ENCODE measurements at regions of chr6 and their contacts with region 1.

Region 1: GRCh38 chr6:6131492-6132109 is 124.9 kb upstream of the NRN1 start:
- DNase-seq: peak; percentile 11
- ATAC-seq: no peak
- H3K4me3 Mint-ChIP-seq: no peak overlapping the region
- H3K27ac Mint-ChIP-seq: no peak overlapping the region
- H3K4me1 Mint-ChIP-seq: no peaks in the 10 kb centered on the region
- H3K27me3 Mint-ChIP-seq: peaks cover 5% of the 10 kb centered on the region

Region 2: GRCh38 chr6:5471044-5471443 is 660.6 kb before region 1 on chr6:
- CTCF ChIA-PET with region 1: interaction called, 5 read pairs
- POLR2A ChIA-PET with region 1: no interaction called
- intact Hi-C with region 1: loop called in 1 of 2 experiments (anchors 1 kb)
- DNase-seq: peak; percentile 79
- ATAC-seq: peak; percentile 89
- H3K4me3 Mint-ChIP-seq: no peak overlapping the region
- H3K27ac Mint-ChIP-seq: no peak overlapping the region
- H3K4me1 Mint-ChIP-seq: peaks cover 4% of the 10 kb centered on the region
- H3K27me3 Mint-ChIP-seq: no peaks in the 10 kb centered on the region

Region 3: DNA sequence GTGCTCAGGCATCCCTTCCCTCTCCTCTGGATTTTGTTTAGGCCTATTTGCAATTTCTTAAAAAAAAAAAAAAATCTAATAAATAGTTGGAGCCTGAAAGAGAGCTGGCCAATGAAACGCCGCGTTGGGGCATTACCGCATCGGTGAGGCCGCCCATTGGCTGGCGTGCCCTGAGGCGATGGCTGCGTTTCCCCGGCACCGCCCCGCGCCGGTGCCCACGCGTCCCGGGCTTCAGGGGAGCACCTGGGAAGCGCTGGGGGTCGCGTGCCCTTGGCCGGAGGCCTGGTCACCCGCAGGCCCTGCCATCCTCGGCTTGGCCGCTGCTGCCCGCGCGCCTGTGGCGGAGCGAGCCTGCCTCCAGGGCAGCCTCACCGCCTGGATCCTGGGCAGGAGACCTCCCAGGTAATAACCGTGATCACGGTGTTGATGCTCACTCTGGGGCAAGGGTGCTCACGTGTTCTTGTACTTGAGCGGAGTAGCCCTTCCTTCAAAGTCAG is 280.3 kb before region 1 on chr6:
- CTCF ChIA-PET with region 1: no interaction called
- POLR2A ChIA-PET with region 1: no interaction called
- intact Hi-C with region 1: no loop called
- DNase-seq: peak; percentile 84
- ATAC-seq: peak; percentile 99
- H3K4me3 Mint-ChIP-seq: peak overlapping the region; percentile 65
- H3K27ac Mint-ChIP-seq: peak overlapping the region; percentile 55
- H3K4me1 Mint-ChIP-seq: peaks cover 7% of the 10 kb centered on the region
- H3K27me3 Mint-ChIP-seq: peaks cover 5% of the 10 kb centered on the region

Region 4: GRCh38 chr6:5968817-5969734 is 162.5 kb before region 1 on chr6:
- CTCF ChIA-PET with region 1: no interaction called
- POLR2A ChIA-PET with region 1: no interaction called
- intact Hi-C with region 1: loop called in 1 of 2 experiments (anchors 10 kb)
- DNase-seq: no peak
- ATAC-seq: no peak
- H3K4me3 Mint-ChIP-seq: no peak overlapping the region
- H3K27ac Mint-ChIP-seq: no peak overlapping the region
- H3K4me1 Mint-ChIP-seq: peaks cover 9% of the 10 kb centered on the region
- H3K27me3 Mint-ChIP-seq: peaks cover 14% of the 10 kb centered on the region

Region 5: DNA sequence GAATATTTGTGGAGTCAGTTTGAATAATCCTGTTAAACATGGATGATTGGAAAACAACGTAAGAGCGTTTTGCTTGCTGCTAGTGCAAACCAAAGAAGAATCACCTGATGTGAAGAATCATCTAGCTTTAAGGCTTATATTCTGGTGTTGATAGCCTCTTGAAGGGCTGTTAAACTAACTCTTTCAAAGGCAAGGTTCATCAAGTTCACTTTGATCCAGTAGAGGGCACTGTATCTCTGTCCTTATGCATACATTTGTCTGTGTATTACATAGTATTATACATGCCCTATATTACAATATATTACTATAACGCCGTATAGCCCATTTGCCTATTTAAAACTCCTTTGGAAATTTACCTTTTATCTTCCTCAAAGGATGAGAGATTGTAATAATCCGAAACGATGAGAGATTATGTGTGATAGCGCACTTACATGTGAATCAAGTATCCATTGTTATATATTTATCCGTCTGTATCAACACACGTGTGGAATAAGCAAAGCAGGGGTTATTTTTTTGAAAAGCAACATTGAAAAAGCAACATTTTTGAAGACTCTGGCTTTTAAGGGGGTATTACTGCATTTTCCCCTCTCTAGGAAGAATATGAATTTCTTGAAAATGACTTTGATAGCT is 74.1 kb before region 1 on chr6:
- CTCF ChIA-PET with region 1: interaction called, 7 read pairs
- POLR2A ChIA-PET with region 1: no interaction called
- intact Hi-C with region 1: loop called (anchors 5 kb)
- DNase-seq: no peak
- ATAC-seq: peak; percentile 51
- H3K4me3 Mint-ChIP-seq: no peak overlapping the region
- H3K27ac Mint-ChIP-seq: no peak overlapping the region
- H3K4me1 Mint-ChIP-seq: no peaks in the 10 kb centered on the region
- H3K27me3 Mint-ChIP-seq: peaks cover 16% of the 10 kb centered on the region

Region 6: GRCh38 chr6:6179858-6180623 is 48.4 kb after region 1 on chr6:
- CTCF ChIA-PET with region 1: no interaction called
- POLR2A ChIA-PET with region 1: no interaction called
- intact Hi-C with region 1: no loop called
- DNase-seq: no peak
- ATAC-seq: no peak
- H3K4me3 Mint-ChIP-seq: no peak overlapping the region
- H3K27ac Mint-ChIP-seq: no peak overlapping the region
- H3K4me1 Mint-ChIP-seq: no peaks in the 10 kb centered on the region
- H3K27me3 Mint-ChIP-seq: peaks cover 2% of the 10 kb centered on the region

Region 7: GRCh38 chr6:6246544-6246943 is 114.9 kb after region 1 on chr6:
- CTCF ChIA-PET with region 1: no interaction called
- POLR2A ChIA-PET with region 1: no interaction called
- intact Hi-C with region 1: no loop called
- DNase-seq: no peak
- ATAC-seq: no peak
- H3K4me3 Mint-ChIP-seq: no peak overlapping the region
- H3K27ac Mint-ChIP-seq: no peak overlapping the region
- H3K4me1 Mint-ChIP-seq: no peaks in the 10 kb centered on the region
- H3K27me3 Mint-ChIP-seq: peaks cover 27% of the 10 kb centered on the region

Measured in activated CD4-positive, alpha-beta T cell treated with anti-CD3 and anti-CD28 coated beads for 36 hours (primary cell).